AG04449 (cell line): ENCODE measurements at regions of chr18 and their contacts with region 1.

Region 1: DNA sequence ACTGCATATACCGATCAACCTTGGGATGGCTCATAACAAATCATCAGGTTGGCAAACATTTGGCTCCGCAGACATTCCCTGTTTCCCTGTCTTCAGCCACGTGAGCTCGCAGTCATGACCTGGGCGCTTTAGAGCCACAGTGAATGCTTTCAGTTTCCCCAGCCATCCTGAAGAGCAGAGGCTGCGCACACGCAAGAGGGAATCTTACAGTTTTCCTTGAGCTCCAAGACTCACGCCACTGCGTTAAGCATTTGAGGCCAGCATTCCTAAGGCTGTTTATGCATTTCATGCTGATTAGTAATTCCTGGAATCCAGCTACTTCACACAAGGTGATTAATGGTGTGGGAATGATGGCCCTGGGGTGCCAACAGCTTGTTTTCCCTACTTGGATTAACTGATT is 95.1 kb downstream of the MTCL1 start:
- DNase-seq: peak; percentile 99
- H3K4me3 ChIP-seq: no peak overlapping the region
- CTCF ChIP-seq: no peak

Region 2: DNA sequence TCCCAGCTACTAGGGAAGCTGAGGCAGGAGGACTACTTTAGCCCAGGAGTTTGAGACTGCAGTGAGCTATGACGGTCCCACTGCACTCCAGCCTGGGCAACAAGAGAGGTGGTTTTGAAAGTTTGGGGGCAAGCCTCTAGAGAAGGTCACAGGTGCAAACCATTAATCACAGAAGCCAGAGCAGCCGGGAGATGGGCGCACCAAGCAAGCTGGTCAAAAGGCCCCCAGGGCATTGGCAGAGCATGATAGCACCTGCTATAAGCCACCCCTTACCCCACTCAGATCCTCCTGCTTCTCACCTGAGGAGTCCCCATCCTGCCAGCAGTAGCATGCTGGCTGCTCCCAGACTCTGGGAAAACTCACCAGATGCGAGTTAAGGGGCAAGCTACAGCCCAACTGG is 307.3 kb before region 1 on chr18:
- CTCF ChIA-PET with region 1: no interaction called
- POLR2A ChIA-PET with region 1: no interaction called
- DNase-seq: no peak
- H3K4me3 ChIP-seq: no peak overlapping the region
- CTCF ChIP-seq: no peak

Region 3: GRCh38 chr18:8704361-8705279 is 95.8 kb before region 1 on chr18:
- CTCF ChIA-PET with region 1: no interaction called
- POLR2A ChIA-PET with region 1: interaction called, 16 read pairs
- DNase-seq: peak; percentile 76
- H3K4me3 ChIP-seq: peak overlapping the region; percentile 86
- CTCF ChIP-seq: no peak

Region 4: GRCh38 chr18:8816816-8817215 is 16.4 kb after region 1 on chr18:
- CTCF ChIA-PET with region 1: interaction called, 4 read pairs
- POLR2A ChIA-PET with region 1: interaction called, 21 read pairs
- DNase-seq: no peak
- H3K4me3 ChIP-seq: no peak overlapping the region
- CTCF ChIP-seq: no peak

Region 5: DNA sequence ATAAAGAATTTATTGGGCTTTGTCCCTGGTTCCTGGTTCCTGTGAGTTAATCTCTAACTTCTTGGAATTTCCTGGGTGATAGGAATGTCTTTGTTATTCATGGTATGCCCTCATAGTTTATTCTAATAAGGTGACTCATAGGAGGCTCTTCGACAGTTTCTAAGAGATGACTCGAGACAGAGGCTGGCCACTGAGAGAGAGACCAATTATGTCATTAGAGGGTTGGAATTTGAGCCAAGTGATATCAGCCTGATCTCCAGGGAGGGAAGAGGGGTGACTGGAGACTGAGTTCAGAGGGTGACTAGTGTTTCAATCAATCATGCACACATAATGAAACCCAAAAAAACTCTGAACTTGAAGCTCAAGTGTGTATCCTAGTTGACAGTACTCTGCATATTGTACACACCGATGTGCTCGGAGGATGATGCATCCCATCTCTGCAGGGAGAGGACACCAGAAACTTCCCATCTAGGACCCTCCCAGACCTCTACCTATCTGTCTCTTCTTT is 90.6 kb after region 1 on chr18:
- CTCF ChIA-PET with region 1: no interaction called
- POLR2A ChIA-PET with region 1: no interaction called
- DNase-seq: peak; percentile 88
- H3K4me3 ChIP-seq: no peak overlapping the region
- CTCF ChIP-seq: no peak

Region 6: DNA sequence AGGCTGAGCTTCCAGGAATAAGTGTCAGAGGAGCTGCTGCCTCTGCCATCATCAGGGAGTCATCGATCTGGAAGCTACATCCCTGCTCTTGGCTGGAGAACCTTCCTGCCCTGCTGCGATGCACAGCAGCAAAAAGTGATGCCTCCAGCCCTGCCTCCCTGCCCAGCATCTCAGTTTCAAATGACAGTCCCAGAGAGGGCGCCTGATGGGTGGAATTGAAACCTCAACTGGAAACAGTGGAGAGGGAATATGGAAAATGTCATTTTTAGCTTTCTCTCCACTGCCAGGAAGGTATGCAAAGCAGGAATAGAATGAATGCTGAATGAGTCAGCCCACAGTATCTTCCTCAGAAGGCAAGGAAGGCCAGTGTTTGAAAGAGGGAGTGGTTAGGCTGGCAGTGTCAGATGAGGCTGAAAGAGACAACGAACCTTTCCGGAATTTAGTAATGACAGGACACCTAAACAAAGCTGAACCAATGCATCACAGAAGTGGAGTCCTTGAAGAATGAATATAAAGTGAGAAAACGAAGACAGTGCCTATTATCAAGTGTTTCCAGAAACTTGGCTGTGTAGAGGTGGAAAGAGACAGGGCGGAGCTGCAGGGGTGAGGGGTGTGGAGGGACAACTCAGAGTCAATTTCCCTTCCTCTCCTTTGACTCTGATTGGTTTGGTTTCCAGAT is 148.2 kb after region 1 on chr18:
- CTCF ChIA-PET with region 1: interaction called, 4 read pairs
- POLR2A ChIA-PET with region 1: interaction called, 17 read pairs
- DNase-seq: no peak
- H3K4me3 ChIP-seq: peak overlapping the region; percentile 54
- CTCF ChIP-seq: peak; percentile 15